K562 (cell line): ENCODE measurements at regions of chr16 and their contacts with region 1.

Region 1: DNA sequence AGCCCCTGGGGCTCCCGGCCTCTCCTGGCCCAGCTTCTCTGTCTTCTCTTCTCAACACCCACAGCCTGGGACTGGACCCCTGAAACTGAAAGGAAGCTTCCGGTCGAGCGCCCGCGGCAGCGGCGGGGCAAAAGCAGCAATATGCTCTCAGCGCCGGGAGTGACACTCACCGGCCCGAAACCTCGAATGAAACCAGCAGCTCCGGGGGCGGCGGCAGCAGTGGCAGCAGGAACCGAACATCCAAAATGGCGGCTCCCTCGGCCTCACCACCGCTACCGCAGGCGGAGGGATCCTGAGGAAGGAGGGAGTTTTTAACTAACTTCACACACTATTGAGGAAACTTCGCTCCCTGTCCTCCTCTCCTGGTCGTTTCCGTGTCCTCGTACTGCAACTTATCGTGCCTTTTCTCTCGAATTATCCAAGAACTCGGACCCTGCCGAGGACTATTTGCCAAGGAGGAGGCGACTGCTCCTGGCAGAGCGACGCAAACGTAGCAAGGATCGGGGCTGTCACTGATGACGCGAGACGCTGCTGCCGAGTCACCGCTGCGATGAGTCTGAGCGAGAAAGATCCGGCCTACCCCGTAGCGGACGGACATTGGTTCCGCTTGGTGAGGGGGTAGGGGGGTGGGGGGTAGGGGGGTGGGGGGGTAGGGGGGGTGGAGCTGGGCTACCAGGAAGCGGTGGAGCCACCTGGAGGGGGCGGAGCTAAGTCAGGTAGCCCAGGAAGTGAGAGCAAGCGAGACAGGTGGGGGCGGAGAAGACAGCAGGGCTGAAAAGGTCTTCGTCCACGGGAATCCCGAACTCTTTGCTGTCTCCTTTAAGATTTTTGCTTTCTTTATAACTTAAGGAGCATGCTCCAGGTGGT is at the start of gene AP1G1:
- DNase-seq: peak; percentile 96 to 98 (median 97)
- ATAC-seq: peak; percentile 93
- H3K4me3 ChIP-seq: peak within 1 kb of the TSS; percentile 68
- H3K27ac ChIP-seq: peak within 1 kb of the TSS; percentile 100
- H3K4me1 ChIP-seq: peaks cover 4 to 8% of the 10 kb centered on the region in 2 experiments; a peak in 4 of 5 replicates
- H3K27me3 ChIP-seq: no peaks in the 10 kb centered on the region; a peak in 1 of 5 replicates
- CTCF ChIP-seq: no peak
- EP300 ChIP-seq: no peak
- POLR2A ChIP-seq: peak; percentile 83
- RAD21 ChIP-seq: no peak
- polyA plus RNA-seq, gene AP1G1: 7.0 to 13.6 TPM

Region 2: GRCh38 chr16:71767060-71767900 is 41.5 kb before region 1 on chr16:
- CTCF ChIA-PET with region 1: no interaction called
- POLR2A ChIA-PET with region 1: no interaction called
- in situ Hi-C with region 1: no loop called
- intact Hi-C with region 1: no loop called
- DNase-seq: no peak
- ATAC-seq: no peak
- H3K4me3 ChIP-seq: no peak overlapping the region
- H3K27ac ChIP-seq: no peak overlapping the region
- H3K4me1 ChIP-seq: no peaks in the 10 kb centered on the region
- H3K27me3 ChIP-seq: no peaks in the 10 kb centered on the region
- CTCF ChIP-seq: no peak
- EP300 ChIP-seq: no peak
- POLR2A ChIP-seq: no peak
- RAD21 ChIP-seq: no peak

Region 3: DNA sequence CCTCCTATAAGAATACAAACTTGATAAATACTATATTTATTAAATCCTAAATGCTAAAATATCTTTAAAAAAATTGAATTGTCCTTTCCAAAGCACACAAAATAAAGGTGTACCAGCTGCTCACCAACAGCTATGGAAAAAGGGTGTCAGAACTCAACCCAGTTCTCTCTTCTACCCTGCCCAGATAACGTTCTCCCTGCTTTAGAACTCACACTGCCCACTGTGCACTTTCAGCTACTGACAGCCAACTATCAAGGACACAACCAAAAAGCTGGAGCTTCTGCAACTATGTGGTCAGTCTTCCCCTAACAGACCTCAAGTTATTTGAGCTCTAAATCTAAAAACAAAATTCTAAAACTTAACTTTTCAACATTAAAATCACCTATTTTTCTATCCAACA is 13.9 kb before region 1 on chr16:
- CTCF ChIA-PET with region 1: no interaction called
- POLR2A ChIA-PET with region 1: interaction called, 25 read pairs
- in situ Hi-C with region 1: no loop called
- intact Hi-C with region 1: no loop called
- DNase-seq: no peak
- ATAC-seq: peak; percentile 41; the same call in 2 of the 3 replicates
- H3K4me3 ChIP-seq: no peak overlapping the region
- H3K27ac ChIP-seq: no peak overlapping the region; the same call in 2 of the 3 replicates
- H3K4me1 ChIP-seq: no peaks in the 10 kb centered on the region; a peak in 2 of 5 replicates
- H3K27me3 ChIP-seq: no peaks in the 10 kb centered on the region
- CTCF ChIP-seq: no peak
- EP300 ChIP-seq: no peak
- POLR2A ChIP-seq: no peak
- RAD21 ChIP-seq: no peak

Region 4: DNA sequence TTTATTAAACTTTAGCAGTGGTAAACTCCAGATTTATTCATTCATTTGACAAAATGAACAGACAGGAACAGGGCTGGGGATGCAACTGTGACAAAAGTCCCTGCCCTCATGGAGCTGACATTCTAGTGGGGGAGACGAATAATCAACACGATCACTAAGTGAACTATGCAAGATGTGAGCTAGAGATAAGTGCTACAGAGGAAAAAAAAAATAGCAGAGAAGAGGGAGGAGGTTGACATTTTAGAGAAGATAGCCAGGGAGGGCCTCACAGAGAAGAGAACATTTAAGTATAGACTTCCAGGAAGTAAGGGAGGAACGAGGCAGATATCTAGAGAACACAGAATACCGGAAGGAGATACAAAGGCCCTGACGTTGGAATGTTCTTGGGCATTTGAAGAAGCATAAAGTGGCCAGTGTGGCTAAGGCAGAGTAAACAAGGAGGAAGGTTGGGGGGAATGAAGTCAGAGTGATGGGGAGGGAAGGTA is 17.7 kb after region 1 on chr16:
- CTCF ChIA-PET with region 1: no interaction called
- POLR2A ChIA-PET with region 1: interaction called, 17 read pairs
- in situ Hi-C with region 1: no loop called
- intact Hi-C with region 1: loop called (anchors 2 kb)
- DNase-seq: peak in 2 of 4 experiments; percentile 52 to 58
- ATAC-seq: peak; percentile 63
- H3K4me3 ChIP-seq: no peak overlapping the region
- H3K27ac ChIP-seq: peak overlapping the region; percentile 67; the same call in 2 of the 3 replicates
- H3K4me1 ChIP-seq: no peaks in the 10 kb centered on the region; a peak in 2 of 5 replicates
- H3K27me3 ChIP-seq: no peaks in the 10 kb centered on the region
- CTCF ChIP-seq: no peak
- EP300 ChIP-seq: peak; percentile 51; the same call in 1 of the 2 replicates
- POLR2A ChIP-seq: no peak
- RAD21 ChIP-seq: no peak

Region 5: GRCh38 chr16:71845639-71846430 is 37.0 kb after region 1 on chr16 and contains the start of gene ATXN1L:
- CTCF ChIA-PET with region 1: no interaction called
- POLR2A ChIA-PET with region 1: no interaction called
- in situ Hi-C with region 1: no loop called
- intact Hi-C with region 1: loop called (anchors 5 kb)
- DNase-seq: peak; percentile 96 to 99 (median 98)
- ATAC-seq: peak; percentile 99
- H3K4me3 ChIP-seq: peak within 1 kb of the TSS; percentile 91
- H3K27ac ChIP-seq: peak within 1 kb of the TSS; percentile 59
- H3K4me1 ChIP-seq: peaks cover 0 to 10% of the 10 kb centered on the region in 2 experiments; a peak in 2 of 5 replicates
- H3K27me3 ChIP-seq: no peaks in the 10 kb centered on the region
- CTCF ChIP-seq: peak in 1 of 3 experiments; percentile 3; a peak in 1 of 6 replicates
- EP300 ChIP-seq: no peak; the same call in 1 of the 2 replicates
- POLR2A ChIP-seq: peak; percentile 83
- RAD21 ChIP-seq: peak in 1 of 2 experiments; percentile 11; a peak in 1 of 4 replicates
- polyA plus RNA-seq, gene ATXN1L: 1.4 to 2.4 TPM